Right ventricle myocardium superior (tissue), 1 donor: ENCODE measurements at regions of chr17 and their contacts with region 1.

Region 1: GRCh38 chr17:78497115-78497540 is 80.1 kb downstream of the DNAH17 start:
- DNase-seq: peak; percentile 74
- ATAC-seq: peak; percentile 93

Region 2: GRCh38 chr17:78708510-78708973 is 211.4 kb after region 1 on chr17:
- intact Hi-C with region 1: loop called (anchors 2 kb)
- DNase-seq: peak; percentile 69
- ATAC-seq: peak; percentile 87

Region 3: DNA sequence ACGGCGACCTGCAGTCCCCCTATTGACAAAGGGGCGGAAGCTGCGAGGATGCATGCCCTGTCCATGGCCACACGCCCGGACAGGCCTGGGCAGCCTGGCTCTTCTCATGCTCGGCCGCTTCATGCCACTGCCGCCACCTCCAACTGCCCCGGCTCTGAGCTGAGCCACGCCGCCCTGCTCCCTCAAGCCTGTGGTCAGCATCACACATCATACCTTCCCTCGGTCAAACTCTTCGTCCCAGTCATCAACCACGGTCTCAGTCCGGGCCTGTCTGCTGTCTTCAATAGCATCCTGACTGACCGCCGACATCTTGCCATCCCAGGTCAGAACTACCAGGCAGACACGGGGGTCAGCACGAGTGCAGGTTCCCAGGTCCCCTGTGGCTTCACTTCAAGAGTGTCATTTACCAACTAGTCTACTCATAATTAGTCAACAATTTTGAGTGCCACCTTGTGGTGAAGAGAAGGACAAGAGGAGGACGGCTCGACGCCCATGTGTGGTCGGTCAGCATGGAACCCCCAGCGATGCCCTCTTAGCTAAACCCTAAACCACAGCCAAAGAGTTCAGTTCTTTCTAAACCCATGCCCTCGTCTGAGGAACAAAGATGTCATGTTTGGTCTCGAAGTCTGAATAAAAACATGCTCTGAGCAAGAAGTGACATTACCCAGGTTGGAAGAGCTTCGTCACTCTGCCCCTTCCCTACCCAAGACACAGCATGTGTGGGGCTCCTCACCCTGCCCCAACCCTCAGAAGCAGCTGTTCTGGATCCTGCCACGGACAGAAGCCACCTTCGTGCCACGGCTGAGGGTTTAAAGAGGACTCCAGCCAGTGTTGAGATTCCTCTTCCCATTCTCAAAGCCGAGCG is 301.8 kb after region 1 on chr17:
- intact Hi-C with region 1: loop called (anchors 2 kb)
- DNase-seq: peak; percentile 38
- ATAC-seq: peak; percentile 46